ENCODE measurements at regions of chr6 and their contacts with region 1.

Region 1: DNA sequence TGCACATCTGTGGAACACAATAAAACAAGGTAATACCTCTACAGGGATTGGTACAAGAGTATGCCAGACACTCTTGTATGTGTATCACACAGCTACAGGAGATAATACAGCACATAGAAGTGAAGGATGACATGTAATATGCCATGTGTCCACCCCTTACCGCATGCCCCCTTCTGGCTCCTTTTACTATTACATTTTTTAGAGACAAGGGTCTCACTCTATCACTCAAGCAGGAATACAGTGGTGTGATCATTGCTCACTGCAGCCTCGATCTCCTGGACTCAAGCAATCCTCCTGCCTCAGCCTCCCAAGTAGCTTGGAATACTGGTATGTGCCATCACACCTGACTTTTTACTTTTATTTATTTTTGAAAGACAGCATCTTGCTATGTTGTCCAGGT is 4.2 kb upstream of the NCR3 start:
- DNase-seq: peak; percentile 70
- H3K4me3 ChIP-seq: no peak overlapping the region; a peak in 1 of 4 replicates
- H3K27ac ChIP-seq: no peak overlapping the region
- H3K4me1 ChIP-seq: no peaks in the 10 kb centered on the region
- H3K27me3 ChIP-seq: no peaks in the 10 kb centered on the region
- CTCF ChIP-seq: peak; percentile 59
- EP300 ChIP-seq: no peak
- RAD21 ChIP-seq: peak; percentile 49

Region 2: GRCh38 chr6:31356946-31357466 is 240.0 kb before region 1 on chr6 and contains the start of gene HLA-B:
- CTCF ChIA-PET with region 1: no interaction called
- POLR2A ChIA-PET with region 1: no interaction called
- DNase-seq: peak; percentile 62
- H3K4me3 ChIP-seq: peak within 1 kb of the TSS in 1 of 2 experiments; percentile 49; a peak in 2 of 4 replicates
- H3K27ac ChIP-seq: no peak within 1 kb of the TSS
- H3K4me1 ChIP-seq: no peaks in the 10 kb centered on the region; a peak in 1 of 4 replicates
- H3K27me3 ChIP-seq: no peaks in the 10 kb centered on the region; the same call in 1 of the 2 replicates
- CTCF ChIP-seq: no peak
- EP300 ChIP-seq: no peak
- RAD21 ChIP-seq: no peak
- polyA plus RNA-seq, gene HLA-B: 18.7 and 18.9 TPM in 2 replicates

Region 3: DNA sequence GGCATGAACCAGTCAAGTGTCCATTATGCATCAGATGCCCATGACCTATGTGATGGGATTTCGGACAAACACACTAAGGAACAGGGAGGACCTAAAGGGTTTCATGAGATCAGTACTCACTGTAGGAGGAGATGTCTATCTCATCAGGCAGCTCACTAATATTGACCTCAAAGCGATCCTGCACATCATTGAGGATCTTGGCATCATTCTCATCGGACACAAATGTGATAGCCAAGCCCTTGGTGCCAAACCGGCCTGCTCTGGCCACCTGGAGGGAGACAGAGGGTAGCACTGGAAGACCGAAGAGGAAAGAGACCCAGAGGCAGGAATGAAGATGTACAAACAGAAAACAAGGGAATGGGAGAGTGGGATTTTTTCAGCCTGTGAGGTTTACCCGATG is 66.3 kb before region 1 on chr6:
- CTCF ChIA-PET with region 1: interaction called, 12 read pairs
- POLR2A ChIA-PET with region 1: no interaction called
- DNase-seq: no peak
- H3K4me3 ChIP-seq: no peak overlapping the region
- H3K27ac ChIP-seq: no peak overlapping the region
- H3K4me1 ChIP-seq: peaks cover 0 to 11% of the 10 kb centered on the region in 2 experiments; a peak in 2 of 4 replicates
- H3K27me3 ChIP-seq: no peaks in the 10 kb centered on the region
- CTCF ChIP-seq: no peak; the same call in 1 of the 2 replicates
- EP300 ChIP-seq: no peak
- RAD21 ChIP-seq: no peak

Region 4: GRCh38 chr6:31546962-31547726 is 49.9 kb before region 1 on chr6 and contains the start of gene NFKBIL1:
- CTCF ChIA-PET with region 1: interaction called, 301 read pairs
- POLR2A ChIA-PET with region 1: interaction called, 18 read pairs
- DNase-seq: peak; percentile 90
- H3K4me3 ChIP-seq: peak within 1 kb of the TSS; percentile 52 to 77
- H3K27ac ChIP-seq: peak within 1 kb of the TSS; percentile 74 to 78
- H3K4me1 ChIP-seq: peaks cover 8 to 11% of the 10 kb centered on the region in 2 experiments; a peak in 3 of 4 replicates
- H3K27me3 ChIP-seq: no peaks in the 10 kb centered on the region
- CTCF ChIP-seq: no peak
- EP300 ChIP-seq: no peak
- RAD21 ChIP-seq: no peak
- polyA plus RNA-seq, gene NFKBIL1: 14.6 and 17.1 TPM in 2 replicates

Region 5: GRCh38 chr6:31580807-31581433 is 16.1 kb before region 1 on chr6:
- CTCF ChIA-PET with region 1: interaction called, 312 read pairs
- POLR2A ChIA-PET with region 1: interaction called, 12 read pairs
- DNase-seq: peak; percentile 97
- H3K4me3 ChIP-seq: peak overlapping the region; percentile 63 to 96
- H3K27ac ChIP-seq: peak overlapping the region in 1 of 2 experiments; percentile 51; a peak in 1 of 4 replicates
- H3K4me1 ChIP-seq: peaks cover 0 to 11% of the 10 kb centered on the region in 2 experiments; a peak in 1 of 4 replicates
- H3K27me3 ChIP-seq: no peaks in the 10 kb centered on the region
- CTCF ChIP-seq: peak; percentile 90
- EP300 ChIP-seq: no peak
- RAD21 ChIP-seq: peak; percentile 61

Region 6: DNA sequence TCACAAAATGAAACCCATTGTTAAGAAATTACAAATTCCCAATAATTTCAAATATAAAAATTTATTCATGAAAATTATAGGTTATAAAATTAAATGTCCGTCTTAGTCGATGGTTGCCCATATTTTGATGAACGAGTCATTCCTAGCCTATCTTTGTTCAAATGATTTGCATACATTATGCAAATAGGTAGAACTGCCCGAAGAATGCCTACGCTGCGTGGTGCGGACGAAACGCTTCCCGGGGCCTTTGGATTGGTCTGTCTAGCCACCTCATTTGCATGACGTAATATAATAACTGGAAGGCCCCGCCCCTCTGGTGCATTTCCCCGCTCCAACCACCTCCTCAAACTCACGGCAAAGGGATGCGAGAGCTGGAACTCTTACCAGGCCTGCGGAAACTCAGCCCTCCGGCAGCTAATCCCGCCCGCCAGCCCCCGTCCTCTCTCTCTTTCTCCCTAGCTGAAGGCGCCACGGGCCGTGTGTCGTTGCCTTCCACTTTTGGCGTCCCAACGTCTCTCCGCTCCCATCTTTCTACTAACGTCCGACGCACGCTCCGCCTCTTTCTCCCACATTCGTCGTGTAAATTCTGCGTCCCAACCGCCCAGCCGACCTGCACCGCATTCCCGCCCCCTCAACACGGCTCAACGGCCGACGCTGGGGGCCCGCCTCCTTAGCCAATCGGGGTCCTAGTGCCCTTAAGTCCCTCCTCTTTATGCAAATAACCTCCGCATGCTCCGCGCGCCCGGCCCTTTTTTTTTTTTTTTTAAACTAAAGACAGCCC is 23.0 kb after region 1 on chr6:
- CTCF ChIA-PET with region 1: interaction called, 35 read pairs
- POLR2A ChIA-PET with region 1: no interaction called
- DNase-seq: peak; percentile 96
- H3K4me3 ChIP-seq: peak overlapping the region; percentile 68 to 75
- H3K27ac ChIP-seq: peak overlapping the region; percentile 99
- H3K4me1 ChIP-seq: peaks cover 10 to 11% of the 10 kb centered on the region in 2 experiments
- H3K27me3 ChIP-seq: no peaks in the 10 kb centered on the region
- CTCF ChIP-seq: no peak
- EP300 ChIP-seq: no peak; a peak in 1 of 4 replicates
- RAD21 ChIP-seq: no peak

Measured in SK-N-SH (cell line).